Heart right ventricle (tissue), 16 donors: ENCODE measurements at regions of chr15 and their contacts with region 1.

Region 1: DNA sequence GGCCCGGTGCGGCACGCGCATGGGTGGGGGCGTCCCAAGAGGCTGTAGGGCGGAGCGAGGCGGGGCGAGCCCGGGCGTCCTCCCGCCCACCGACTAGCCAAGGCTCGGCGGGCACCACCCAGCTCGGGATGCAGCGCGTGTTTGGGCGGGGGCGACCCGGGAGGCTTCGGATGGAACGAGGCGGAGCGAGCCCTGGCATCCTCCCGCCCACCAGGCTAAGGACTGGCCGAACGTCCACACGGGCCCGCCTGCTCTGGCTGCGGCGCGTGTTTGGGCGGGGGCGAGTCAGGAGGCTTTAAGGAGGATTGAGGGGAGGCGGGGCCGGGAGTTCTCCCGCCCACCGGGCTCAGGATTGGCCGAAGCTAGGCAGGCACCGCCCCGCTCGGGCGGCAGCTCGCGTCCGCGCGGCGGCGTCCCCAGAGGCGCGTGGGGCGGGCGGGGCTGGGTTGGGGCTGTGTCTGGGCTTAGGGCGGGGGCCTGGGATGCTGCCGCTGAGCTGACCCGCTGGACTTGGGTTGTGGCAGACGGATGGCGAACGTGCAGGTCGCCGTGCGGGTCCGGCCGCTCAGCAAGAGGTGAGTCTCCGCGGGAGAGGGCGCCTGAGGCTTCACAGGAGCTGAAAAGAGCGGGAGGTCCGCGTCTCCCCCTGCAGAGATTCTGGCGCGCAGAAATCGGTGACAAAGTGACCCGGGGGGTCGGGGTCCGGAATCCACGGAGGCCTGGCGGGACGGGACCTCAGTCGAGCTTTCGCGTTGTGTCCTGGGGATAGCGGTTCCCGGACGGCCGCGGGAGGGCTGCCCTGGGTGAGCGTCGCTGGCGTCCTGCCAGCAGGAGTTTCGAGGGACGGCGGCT is at the start of gene STARD9:
- DNase-seq: peak; percentile 98 to 99
- ATAC-seq: peak; percentile 96 to 99 (median 97)
- H3K4me3 ChIP-seq: peak within 1 kb of the TSS; percentile 47 to 96 (median 91)
- H3K27ac ChIP-seq: peak within 1 kb of the TSS; percentile 37 to 95 (median 90)
- H3K4me1 ChIP-seq: peaks cover 0 to 50% (median 44%) of the 10 kb centered on the region in 9 donors
- H3K27me3 ChIP-seq: no peaks in the 10 kb centered on the region
- CTCF ChIP-seq: peak in 1 of 9 donors; percentile 28
- total RNA-seq, gene STARD9: 2.7 to 9.6 (median 6.1) TPM

Region 2: DNA sequence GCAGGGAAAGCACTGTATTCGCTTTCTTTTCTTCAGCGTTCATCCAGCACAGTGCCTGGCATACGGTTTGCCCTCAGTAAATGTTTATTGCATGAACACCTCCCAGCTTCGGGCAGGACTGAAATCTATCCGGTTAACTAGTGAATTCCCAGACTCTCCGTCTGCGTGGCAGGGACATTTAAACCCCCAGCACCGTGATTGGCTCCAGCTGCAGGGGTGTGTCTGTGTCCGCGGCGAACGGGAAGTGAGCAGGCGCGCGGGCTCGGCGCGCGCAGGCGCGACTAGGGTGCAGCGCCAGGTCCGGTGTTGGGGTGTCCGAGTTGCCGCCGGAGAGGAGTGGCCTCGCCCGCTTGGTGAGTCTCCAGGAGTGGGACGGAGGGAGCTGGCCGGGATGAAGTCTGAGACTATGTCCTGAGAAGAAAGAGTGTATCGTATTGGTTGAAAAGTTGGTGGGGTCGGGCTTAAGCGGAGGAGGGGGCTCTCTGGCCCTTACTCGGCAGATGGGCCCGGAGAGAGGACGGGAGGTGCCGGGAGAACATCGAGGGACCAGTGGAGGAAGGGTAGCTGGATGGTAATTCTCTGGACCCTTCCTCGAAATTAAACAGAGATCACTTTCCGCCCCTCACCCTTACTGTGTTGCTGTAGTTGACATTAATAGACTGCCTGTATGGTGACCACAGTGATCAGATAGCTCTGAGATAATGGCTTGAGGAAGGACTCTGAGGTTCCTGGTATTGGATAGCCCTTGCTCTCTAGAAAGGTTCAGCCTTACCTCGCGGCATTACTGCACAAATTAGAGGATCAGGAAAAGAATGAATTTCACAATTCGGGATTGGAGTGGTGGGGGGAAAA is 79.8 kb before region 1 on chr15 and contains the start of gene SNAP23:
- intact Hi-C with region 1: loop called in 1 of 10 experiments (anchors 10 kb)
- DNase-seq: peak; percentile 93
- ATAC-seq: peak; percentile 95 to 97 (median 96)
- H3K4me3 ChIP-seq: peak within 1 kb of the TSS; percentile 34 to 95 (median 68)
- H3K27ac ChIP-seq: peak within 1 kb of the TSS; percentile 83 to 93 (median 90)
- H3K4me1 ChIP-seq: peaks cover 8 to 81% (median 58%) of the 10 kb centered on the region in 9 donors
- H3K27me3 ChIP-seq: no peaks in the 10 kb centered on the region
- CTCF ChIP-seq: no peak
- total RNA-seq, gene SNAP23: 26.7 to 64.8 (median 46.6) TPM

Region 3: DNA sequence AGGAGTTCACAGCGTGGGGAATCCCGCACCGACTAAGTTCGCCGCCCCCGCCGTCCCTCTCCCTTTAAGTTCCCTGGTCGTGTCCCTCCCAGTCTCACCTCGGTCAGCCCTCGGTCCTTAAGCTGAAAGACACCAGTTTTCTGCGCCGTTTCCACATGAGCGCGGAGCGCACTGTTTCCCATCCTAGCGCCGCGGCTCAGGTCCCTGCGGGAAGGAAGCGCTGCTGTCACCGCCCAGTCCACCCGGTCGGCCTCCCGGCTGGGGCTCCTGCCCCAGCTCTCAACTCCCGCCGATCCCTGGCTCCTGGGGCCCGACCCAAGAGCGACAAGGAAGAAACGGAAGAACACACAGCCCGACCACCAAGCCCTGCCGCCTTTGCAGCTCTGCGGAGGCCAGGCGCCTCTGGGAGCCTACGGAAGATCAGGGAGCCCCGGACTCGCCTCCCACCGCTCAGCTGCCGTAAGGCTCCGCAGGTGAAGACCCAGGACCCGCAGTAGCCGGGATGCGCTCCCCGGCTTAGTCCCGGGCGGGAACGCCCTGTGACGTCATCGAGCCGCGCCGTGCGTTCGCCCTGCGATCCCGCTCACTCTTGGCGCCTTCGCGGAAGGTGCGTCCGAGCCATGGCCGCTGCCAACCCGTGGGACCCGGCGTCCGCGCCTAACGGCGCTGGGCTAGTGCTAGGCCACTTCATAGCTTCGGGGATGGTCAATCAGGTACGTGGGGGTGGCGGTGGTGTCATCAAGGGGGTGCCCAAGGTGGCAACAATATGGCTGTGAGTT is 27.0 kb before region 1 on chr15 and contains the starts of genes HAUS2 and LRRC57:
- intact Hi-C with region 1: loop called in 1 of 10 experiments (anchors 1 kb)
- DNase-seq: peak; percentile 86 to 92
- ATAC-seq: peak; percentile 95 to 98 (median 97)
- H3K4me3 ChIP-seq: peak within 1 kb of the TSS; percentile 75 to 99 (median 96)
- H3K27ac ChIP-seq: peak within 1 kb of the TSS; percentile 71 to 97 (median 92)
- H3K4me1 ChIP-seq: peaks cover 3 to 58% (median 26%) of the 10 kb centered on the region in 9 donors
- H3K27me3 ChIP-seq: no peaks in the 10 kb centered on the region
- CTCF ChIP-seq: no peak
- total RNA-seq, gene HAUS2: 8.5 to 17.0 (median 11.9) TPM
- total RNA-seq, gene LRRC57: 12.1 to 24.6 (median 16.6) TPM

Region 4: GRCh38 chr15:42591238-42591934 is 16.0 kb after region 1 on chr15:
- intact Hi-C with region 1: loop called in 1 of 10 experiments (anchors 1 kb)
- DNase-seq: no peak
- ATAC-seq: no peak
- H3K4me3 ChIP-seq: no peak overlapping the region
- H3K27ac ChIP-seq: no peak overlapping the region
- H3K4me1 ChIP-seq: peaks cover 0 to 69% (median 37%) of the 10 kb centered on the region in 9 donors
- H3K27me3 ChIP-seq: no peaks in the 10 kb centered on the region
- CTCF ChIP-seq: peak in 6 of 9 donors; percentile 14 to 42 (median 35)

Region 5: DNA sequence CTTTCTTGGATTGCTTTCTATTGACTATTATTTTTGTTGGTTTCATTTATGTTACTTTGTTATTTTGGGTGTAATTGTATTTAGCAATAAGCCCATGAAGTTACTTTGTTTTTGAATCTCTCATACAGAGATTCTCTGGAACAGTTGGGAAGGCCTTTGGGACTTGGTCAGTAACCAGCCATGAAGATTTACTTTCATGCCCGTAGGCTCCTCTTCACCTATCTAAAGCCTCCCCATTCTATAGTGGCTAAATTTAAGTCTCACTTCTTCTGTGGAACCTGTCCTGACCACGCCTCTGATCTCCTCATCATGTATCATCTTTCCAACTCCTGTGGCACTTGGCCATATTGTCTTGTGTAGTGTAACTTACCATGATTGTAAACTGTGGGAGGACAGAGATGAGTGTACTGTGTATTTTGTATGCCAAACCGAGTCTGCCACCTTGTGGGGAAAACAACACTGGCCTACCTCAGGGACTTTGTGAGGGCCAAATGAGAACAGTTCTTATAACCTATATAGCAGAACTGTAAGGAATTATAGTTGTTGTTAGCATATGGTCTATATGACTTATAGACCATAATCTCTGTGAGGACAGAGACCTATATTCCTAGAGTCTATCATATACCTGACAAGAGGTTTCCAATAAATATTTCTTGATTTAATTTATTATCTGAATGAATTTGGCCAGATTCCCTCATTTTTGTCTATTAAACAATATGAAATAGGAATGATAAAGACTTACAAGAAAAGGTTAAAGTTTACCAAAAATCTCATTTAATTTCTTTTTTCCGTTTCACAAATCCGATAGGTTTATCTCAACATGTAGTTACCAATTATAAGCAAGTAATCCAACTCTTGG is 75.0 kb after region 1 on chr15:
- intact Hi-C with region 1: loop called in 4 of 10 experiments (anchors 5 to 10 kb)
- DNase-seq: peak in 1 of 2 donors; percentile 71
- ATAC-seq: peak; percentile 85 to 97 (median 95)
- H3K4me3 ChIP-seq: no peak overlapping the region
- H3K27ac ChIP-seq: no peak overlapping the region
- H3K4me1 ChIP-seq: peaks cover 0 to 17% (median 3%) of the 10 kb centered on the region in 9 donors
- H3K27me3 ChIP-seq: no peaks in the 10 kb centered on the region
- CTCF ChIP-seq: peak; percentile 53 to 92 (median 82)